ENCODE measurements at regions of chr15 and their contacts with region 1.

Region 1: GRCh38 chr15:48358229-48358641 is 27.0 kb downstream of the DUT start:
- DNase-seq: peak; percentile 82
- H3K4me3 ChIP-seq: peak overlapping the region in 1 of 3 experiments; percentile 4
- H3K27ac ChIP-seq: peak overlapping the region; percentile 28
- H3K4me1 ChIP-seq: peaks cover 22% of the 10 kb centered on the region
- H3K27me3 ChIP-seq: no peaks in the 10 kb centered on the region
- CTCF ChIP-seq: peak; percentile 35 to 37
- POLR2A ChIP-seq: no peak

Region 2: GRCh38 chr15:48392356-48392755 is 34.1 kb after region 1 on chr15:
- CTCF ChIA-PET with region 1: interaction called, 19 read pairs
- POLR2A ChIA-PET with region 1: no interaction called
- dilution Hi-C with region 1: no loop called
- intact Hi-C with region 1: loop called (anchors 1 kb)
- DNase-seq: peak; percentile 99
- H3K4me3 ChIP-seq: no peak overlapping the region
- H3K27ac ChIP-seq: peak overlapping the region; percentile 78
- H3K4me1 ChIP-seq: peaks cover 36% of the 10 kb centered on the region
- H3K27me3 ChIP-seq: no peaks in the 10 kb centered on the region
- CTCF ChIP-seq: no peak
- POLR2A ChIP-seq: no peak

Region 3: DNA sequence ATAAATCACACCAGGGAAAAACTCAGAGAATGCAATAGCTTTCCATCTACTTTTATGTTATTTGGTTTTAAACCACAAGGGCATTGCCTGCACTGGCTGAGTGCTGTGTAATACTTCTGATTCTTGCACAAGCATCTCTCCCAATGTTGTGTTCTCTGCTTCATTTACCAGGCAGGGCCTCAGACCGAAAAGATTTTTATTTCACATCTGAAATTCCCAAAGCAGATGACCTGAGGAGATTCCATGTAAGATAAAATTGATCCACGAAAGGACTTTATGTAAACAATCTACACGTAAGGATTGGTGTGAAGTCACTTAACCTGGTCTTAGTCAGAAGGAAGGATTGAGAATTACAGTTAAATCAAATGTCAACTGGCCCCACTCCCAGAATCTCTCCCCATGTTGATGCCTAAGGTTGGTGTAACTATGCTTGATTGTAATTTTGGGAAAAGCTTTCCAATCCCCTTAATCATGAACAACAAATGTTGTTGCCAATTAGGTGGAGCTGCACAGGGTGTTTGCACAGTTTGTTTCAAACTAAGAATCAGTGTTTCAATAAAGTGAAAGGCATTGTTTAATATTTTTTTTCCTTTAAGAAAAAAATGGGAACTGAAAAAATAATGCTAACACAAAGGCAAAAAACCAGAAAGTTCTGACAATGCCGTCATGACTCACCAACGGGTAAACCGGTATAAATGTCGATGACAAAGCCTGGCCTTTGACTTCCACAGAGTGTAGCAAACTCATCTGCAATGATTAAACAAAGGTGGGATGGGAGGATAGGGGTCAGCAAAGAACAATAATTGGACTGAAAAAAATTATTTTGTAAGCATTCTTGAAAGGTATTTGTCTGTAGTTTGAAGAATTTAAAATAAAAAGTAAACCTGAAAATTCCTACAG is 101.6 kb after region 1 on chr15:
- CTCF ChIA-PET with region 1: interaction called, 16 read pairs
- POLR2A ChIA-PET with region 1: no interaction called
- dilution Hi-C with region 1: no loop called
- intact Hi-C with region 1: no loop called
- DNase-seq: peak; percentile 71
- H3K4me3 ChIP-seq: no peak overlapping the region
- H3K27ac ChIP-seq: no peak overlapping the region
- H3K4me1 ChIP-seq: peaks cover 12% of the 10 kb centered on the region
- H3K27me3 ChIP-seq: no peaks in the 10 kb centered on the region
- CTCF ChIP-seq: no peak
- POLR2A ChIP-seq: no peak

Region 4: DNA sequence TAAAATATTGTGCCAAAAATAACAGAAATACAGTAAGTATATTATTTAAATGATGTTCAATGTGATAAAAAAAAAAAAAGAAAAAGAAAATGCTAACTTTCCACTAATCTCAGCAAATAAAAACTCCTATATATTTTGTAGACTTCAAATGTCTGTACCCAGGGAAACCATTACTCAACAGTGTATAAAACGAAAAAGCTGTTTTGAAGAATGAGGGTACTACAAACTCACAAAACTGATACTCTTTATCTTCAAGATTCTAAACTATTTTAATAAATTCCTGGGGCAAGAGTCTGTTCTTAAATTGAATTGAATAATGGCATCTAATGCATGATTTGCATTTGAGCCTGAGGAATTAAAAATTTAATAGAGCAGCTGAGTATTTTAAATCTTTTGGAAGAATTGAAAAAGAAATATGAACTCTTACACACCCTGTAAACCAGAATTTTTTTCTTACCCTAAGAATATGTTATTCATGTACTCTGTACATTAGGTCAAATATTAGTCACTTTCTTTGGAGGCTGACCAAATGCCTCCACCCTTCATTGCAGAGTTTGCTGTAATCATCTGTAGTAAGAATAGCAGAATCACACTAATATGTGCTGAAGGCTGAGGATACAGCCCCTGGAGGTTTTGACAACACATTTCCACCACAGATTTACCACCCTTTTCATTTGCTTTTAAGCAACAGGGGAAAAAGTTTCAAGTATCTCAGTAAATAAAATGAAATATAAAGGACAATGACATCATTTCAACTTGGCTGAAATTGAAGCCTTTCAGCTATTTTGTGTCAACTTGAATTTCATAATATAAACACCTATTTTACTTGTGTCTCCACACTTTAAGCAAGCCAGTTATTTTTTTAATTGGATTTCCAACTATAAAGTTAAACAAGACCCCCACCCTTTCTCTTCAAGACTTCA is 207.6 kb after region 1 on chr15:
- CTCF ChIA-PET with region 1: interaction called, 10 read pairs
- POLR2A ChIA-PET with region 1: no interaction called
- dilution Hi-C with region 1: no loop called
- intact Hi-C with region 1: no loop called
- DNase-seq: peak; percentile 98
- H3K4me3 ChIP-seq: peak overlapping the region in 1 of 3 experiments; percentile 28
- H3K27ac ChIP-seq: peak overlapping the region; percentile 84
- H3K4me1 ChIP-seq: peaks cover 33% of the 10 kb centered on the region
- H3K27me3 ChIP-seq: no peaks in the 10 kb centered on the region
- CTCF ChIP-seq: no peak
- POLR2A ChIP-seq: no peak

Region 5: GRCh38 chr15:48695088-48695826 is 337.0 kb after region 1 on chr15:
- CTCF ChIA-PET with region 1: interaction called, 9 read pairs
- POLR2A ChIA-PET with region 1: no interaction called
- dilution Hi-C with region 1: no loop called
- intact Hi-C with region 1: loop called (anchors 5 kb)
- DNase-seq: peak; percentile 79
- H3K4me3 ChIP-seq: no peak overlapping the region
- H3K27ac ChIP-seq: no peak overlapping the region
- H3K4me1 ChIP-seq: peaks cover 28% of the 10 kb centered on the region
- H3K27me3 ChIP-seq: no peaks in the 10 kb centered on the region
- CTCF ChIP-seq: no peak
- POLR2A ChIP-seq: peak; percentile 31

Region 6: GRCh38 chr15:48810414-48811317 is 452.4 kb after region 1 on chr15 and contains the start of gene CEP152:
- CTCF ChIA-PET with region 1: interaction called, 15 read pairs
- POLR2A ChIA-PET with region 1: no interaction called
- dilution Hi-C with region 1: no loop called
- intact Hi-C with region 1: no loop called
- DNase-seq: peak; percentile 100
- H3K4me3 ChIP-seq: peak within 1 kb of the TSS; percentile 59 to 90 (median 62)
- H3K27ac ChIP-seq: peak within 1 kb of the TSS; percentile 64
- H3K4me1 ChIP-seq: peaks cover 12% of the 10 kb centered on the region
- H3K27me3 ChIP-seq: peaks cover 7 to 9% of the 10 kb centered on the region in 2 experiments
- CTCF ChIP-seq: no peak
- POLR2A ChIP-seq: peak; percentile 61
- total RNA-seq, gene CEP152: 13.8 and 15.7 TPM in 2 replicates

Region 7: GRCh38 chr15:48963524-48964113 is 605.4 kb after region 1 on chr15 and contains the start of gene SHC4:
- CTCF ChIA-PET with region 1: no interaction called
- POLR2A ChIA-PET with region 1: no interaction called
- dilution Hi-C with region 1: no loop called
- intact Hi-C with region 1: loop called (anchors 5 kb)
- DNase-seq: peak; percentile 89
- H3K4me3 ChIP-seq: peak within 1 kb of the TSS; percentile 17 to 76 (median 40)
- H3K27ac ChIP-seq: no peak within 1 kb of the TSS
- H3K4me1 ChIP-seq: peaks cover 8% of the 10 kb centered on the region
- H3K27me3 ChIP-seq: peaks cover 13 to 21% of the 10 kb centered on the region in 2 experiments
- CTCF ChIP-seq: no peak
- POLR2A ChIP-seq: no peak
- total RNA-seq, gene SHC4: 0.20 TPM in 1 of 2 replicates, not detected in the other

Measured in endothelial cell of umbilical vein (primary cell).